ENCODE measurements at regions of chr18 and their contacts with region 1.

Region 1: GRCh38 chr18:10140461-10141282 is 226.9 kb downstream of the VAPA start:
- DNase-seq: no peak

Region 2: GRCh38 chr18:10067553-10068295 is 72.9 kb before region 1 on chr18:
- intact Hi-C with region 1: loop called (anchors 5 kb)
- DNase-seq: no peak

Region 3: DNA sequence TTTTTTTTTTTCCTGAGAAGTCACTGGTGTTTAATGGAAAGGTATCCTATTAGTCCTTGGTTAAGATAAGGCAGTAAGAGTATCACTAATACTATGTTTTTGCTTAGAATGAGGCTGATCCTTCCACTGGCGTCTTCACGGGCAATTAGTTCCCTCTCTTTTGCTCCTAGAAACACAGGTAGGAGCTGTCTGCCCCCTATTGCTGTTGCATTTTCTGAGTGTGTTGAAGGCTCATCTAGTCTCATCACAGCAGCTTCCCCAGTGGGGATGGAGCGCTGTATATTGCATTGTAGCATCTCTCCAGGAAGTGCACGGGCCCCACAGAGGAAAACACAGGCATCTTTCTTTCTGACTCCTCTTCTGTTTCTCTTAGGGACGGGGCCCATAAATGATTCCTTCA is 530.2 kb after region 1 on chr18:
- intact Hi-C with region 1: no loop called
- DNase-seq: no peak